ENCODE measurements at regions of chr9 and their contacts with region 1.

Region 1: GRCh38 chr9:5825223-5825622 is 7.7 kb downstream of the ERMP1 start:
- DNase-seq: no peak
- ATAC-seq: peak; percentile 16
- H3K4me3 ChIP-seq: no peak overlapping the region
- H3K27ac ChIP-seq: no peak overlapping the region
- H3K4me1 ChIP-seq: peaks cover 2% of the 10 kb centered on the region; the same call in 1 of the 2 replicates
- H3K27me3 ChIP-seq: no peaks in the 10 kb centered on the region
- CTCF ChIP-seq: no peak
- EP300 ChIP-seq: no peak
- POLR2A ChIP-seq: no peak
- RAD21 ChIP-seq: no peak

Region 2: GRCh38 chr9:5799314-5799713 is 25.9 kb before region 1 on chr9:
- CTCF ChIA-PET with region 1: interaction called, 10 read pairs
- POLR2A ChIA-PET with region 1: interaction called, 5 read pairs
- RAD21 ChIA-PET with region 1: interaction called, 4 read pairs
- SMC1A ChIA-PET with region 1: interaction called, 8 read pairs
- in situ Hi-C with region 1: no loop called
- intact Hi-C with region 1: no loop called
- DNase-seq: no peak
- ATAC-seq: peak; percentile 41; the same call in 1 of the 3 replicates
- H3K4me3 ChIP-seq: no peak overlapping the region
- H3K27ac ChIP-seq: no peak overlapping the region
- H3K4me1 ChIP-seq: no peaks in the 10 kb centered on the region
- H3K27me3 ChIP-seq: no peaks in the 10 kb centered on the region
- CTCF ChIP-seq: peak; percentile 48 to 65 (median 54); a peak in 5 of 6 replicates
- EP300 ChIP-seq: no peak
- POLR2A ChIP-seq: no peak
- RAD21 ChIP-seq: peak; percentile 64